HepG2 (cell line): ENCODE measurements at regions of chr7 and their contacts with region 1.

Region 1: DNA sequence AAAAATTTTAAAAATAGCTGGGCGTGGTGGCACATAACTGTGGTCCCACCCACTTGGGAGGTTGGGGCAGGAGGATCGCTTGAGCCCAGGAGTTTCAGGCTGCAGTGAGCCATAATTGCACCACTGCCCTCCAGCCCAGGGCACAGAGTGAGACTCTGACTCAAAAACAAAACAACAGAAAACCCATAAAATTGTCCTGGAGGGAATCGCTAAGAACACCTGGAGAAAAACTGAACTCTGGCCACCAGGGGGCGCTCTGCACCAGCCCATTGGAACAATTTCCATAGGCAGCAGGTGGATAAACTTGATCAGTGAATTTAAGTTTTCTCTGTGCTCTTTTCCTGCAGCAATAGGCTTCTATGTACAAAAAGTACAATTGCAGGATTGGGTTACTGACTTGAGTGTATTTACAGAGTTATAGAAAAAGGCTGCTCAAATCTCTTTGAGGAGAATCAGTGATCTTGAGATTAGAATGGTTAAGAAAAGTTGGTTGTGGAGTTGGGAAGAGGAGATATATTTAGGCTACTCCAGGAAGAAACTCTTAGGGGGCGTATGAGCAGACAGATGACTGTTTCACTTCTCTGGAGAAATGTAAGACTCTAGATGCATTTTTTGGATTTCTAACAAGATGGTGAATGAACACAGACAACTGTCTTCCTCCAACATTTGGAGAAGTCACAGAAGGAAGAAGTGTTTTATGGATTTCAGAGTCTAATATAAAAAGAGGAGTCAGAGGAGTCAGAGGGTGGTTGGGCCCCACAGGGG is 274.9 kb upstream of the GALNT17 start:
- DNase-seq: peak; percentile 39
- ATAC-seq: peak; percentile 44; the same call in 1 of the 3 replicates
- H3K4me3 ChIP-seq: no peak overlapping the region
- H3K27ac ChIP-seq: no peak overlapping the region
- H3K4me1 ChIP-seq: no peaks in the 10 kb centered on the region
- H3K27me3 ChIP-seq: no peaks in the 10 kb centered on the region
- CTCF ChIP-seq: peak; percentile 77
- EP300 ChIP-seq: no peak
- POLR2A ChIP-seq: no peak
- RAD21 ChIP-seq: peak; percentile 64

Region 2: DNA sequence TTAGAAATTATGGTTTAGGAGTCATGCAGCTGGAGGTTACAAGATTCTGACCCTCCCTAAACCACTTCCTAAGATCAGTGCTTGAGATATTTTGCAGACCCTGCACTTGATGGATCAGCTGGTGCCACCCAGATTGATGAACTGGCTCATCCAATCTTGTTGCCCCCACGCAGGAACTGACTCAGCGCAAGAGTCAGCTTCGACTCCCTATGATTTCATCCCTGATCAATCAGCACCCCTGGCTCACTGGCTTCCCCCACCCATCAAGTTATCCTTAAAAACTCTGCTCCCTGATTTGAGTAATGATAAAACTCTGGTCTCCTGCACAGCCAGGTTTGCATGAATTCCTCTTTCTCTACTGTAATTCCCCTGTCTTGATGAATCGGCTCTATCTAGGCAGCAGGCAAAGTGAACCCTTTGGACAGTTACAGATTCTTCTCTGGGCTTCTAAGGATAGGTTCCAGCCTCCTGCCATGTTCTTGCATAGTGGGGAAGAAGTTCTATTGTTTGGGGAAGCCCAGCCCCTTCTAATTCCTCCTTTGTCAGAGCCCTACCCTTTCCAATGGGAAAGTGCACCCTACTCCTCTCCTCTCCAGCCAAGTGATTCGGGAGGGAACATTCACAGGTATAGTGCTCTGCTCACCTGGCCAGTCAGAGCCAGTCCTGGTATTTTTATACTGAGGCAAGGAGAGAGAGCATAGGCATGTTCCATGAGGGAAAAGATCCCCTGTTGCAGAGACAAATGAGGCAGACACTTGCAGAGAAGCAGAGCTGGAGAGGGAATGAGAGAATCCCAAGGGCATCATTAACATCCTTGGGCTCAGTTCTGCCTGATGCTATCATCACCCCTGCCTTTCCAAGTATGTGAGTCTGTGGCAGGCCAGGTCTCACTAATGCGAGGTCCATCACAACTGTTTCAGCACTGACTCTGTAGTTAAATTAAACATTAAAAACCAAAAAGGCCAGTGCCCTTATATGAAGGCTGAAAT is 50.5 kb after region 1 on chr7:
- CTCF ChIA-PET with region 1: no interaction called
- POLR2A ChIA-PET with region 1: no interaction called
- in situ Hi-C with region 1: no loop called
- intact Hi-C with region 1: no loop called
- DNase-seq: no peak
- ATAC-seq: no peak
- H3K4me3 ChIP-seq: no peak overlapping the region
- H3K27ac ChIP-seq: no peak overlapping the region
- H3K4me1 ChIP-seq: no peaks in the 10 kb centered on the region
- H3K27me3 ChIP-seq: no peaks in the 10 kb centered on the region
- CTCF ChIP-seq: no peak
- EP300 ChIP-seq: no peak
- POLR2A ChIP-seq: no peak
- RAD21 ChIP-seq: no peak

Region 3: DNA sequence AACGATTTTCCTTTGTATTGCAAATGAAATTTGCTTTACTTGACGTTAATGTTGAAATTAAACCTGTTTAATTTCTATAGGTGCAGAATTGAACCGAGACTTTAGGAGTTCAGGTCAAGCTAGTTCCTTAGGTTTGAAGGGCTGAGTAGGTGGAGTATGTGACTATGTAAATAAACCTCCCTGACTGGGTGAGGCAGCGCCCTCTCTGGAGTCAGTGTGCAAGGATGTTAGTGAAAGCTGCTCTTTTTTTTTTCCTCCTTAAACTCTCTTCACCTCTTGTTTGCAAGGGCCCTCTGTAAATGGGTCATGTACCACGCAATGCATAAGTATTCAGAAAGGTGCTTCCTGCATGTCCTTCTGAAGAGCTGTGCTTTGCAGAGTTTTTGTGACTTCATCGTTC is 308.7 kb after region 1 on chr7:
- CTCF ChIA-PET with region 1: no interaction called
- POLR2A ChIA-PET with region 1: no interaction called
- in situ Hi-C with region 1: no loop called
- intact Hi-C with region 1: no loop called
- DNase-seq: no peak
- ATAC-seq: no peak
- H3K4me3 ChIP-seq: no peak overlapping the region
- H3K27ac ChIP-seq: no peak overlapping the region
- H3K4me1 ChIP-seq: no peaks in the 10 kb centered on the region
- H3K27me3 ChIP-seq: no peaks in the 10 kb centered on the region; a peak in 1 of 5 replicates
- CTCF ChIP-seq: no peak
- EP300 ChIP-seq: no peak
- POLR2A ChIP-seq: no peak
- RAD21 ChIP-seq: no peak

Region 4: GRCh38 chr7:71733107-71733870 is 876.2 kb after region 1 on chr7:
- CTCF ChIA-PET with region 1: interaction called, 30 read pairs
- POLR2A ChIA-PET with region 1: no interaction called
- in situ Hi-C with region 1: loop called (anchors 5 kb)
- intact Hi-C with region 1: loop called (anchors 1 kb)
- DNase-seq: peak; percentile 52
- ATAC-seq: peak; percentile 87
- H3K4me3 ChIP-seq: 0 out of 6 replicates have a peak overlapping the region, but pooled peaks of 1 of the 3 experiments have one; percentile 16
- H3K27ac ChIP-seq: no peak overlapping the region
- H3K4me1 ChIP-seq: no peaks in the 10 kb centered on the region
- H3K27me3 ChIP-seq: no peaks in the 10 kb centered on the region
- CTCF ChIP-seq: peak; percentile 93
- EP300 ChIP-seq: no peak
- POLR2A ChIP-seq: no peak
- RAD21 ChIP-seq: peak; percentile 87